Activated CD4-positive, alpha-beta memory T cell treated with anti-CD3 and anti-CD28 coated beads, Interleukin-2, amount 10 ng/mL, durations not matched to agents 7 days and 5 days (primary cell): ENCODE measurements at regions of chr2 and their contacts with region 1.

Region 1: GRCh38 chr2:65056215-65057053 is at the start of gene CEP68:
- DNase-seq: peak; percentile 98
- H3K4me3 Mint-ChIP-seq: peak within 1 kb of the TSS; percentile 94
- H3K27ac Mint-ChIP-seq: peak within 1 kb of the TSS; percentile 77
- H3K4me1 Mint-ChIP-seq: peaks cover 59% of the 10 kb centered on the region
- H3K27me3 Mint-ChIP-seq: peaks cover under 1% of the 10 kb centered on the region
- total RNA-seq, gene CEP68: 12.8 to 13.3 TPM

Region 2: DNA sequence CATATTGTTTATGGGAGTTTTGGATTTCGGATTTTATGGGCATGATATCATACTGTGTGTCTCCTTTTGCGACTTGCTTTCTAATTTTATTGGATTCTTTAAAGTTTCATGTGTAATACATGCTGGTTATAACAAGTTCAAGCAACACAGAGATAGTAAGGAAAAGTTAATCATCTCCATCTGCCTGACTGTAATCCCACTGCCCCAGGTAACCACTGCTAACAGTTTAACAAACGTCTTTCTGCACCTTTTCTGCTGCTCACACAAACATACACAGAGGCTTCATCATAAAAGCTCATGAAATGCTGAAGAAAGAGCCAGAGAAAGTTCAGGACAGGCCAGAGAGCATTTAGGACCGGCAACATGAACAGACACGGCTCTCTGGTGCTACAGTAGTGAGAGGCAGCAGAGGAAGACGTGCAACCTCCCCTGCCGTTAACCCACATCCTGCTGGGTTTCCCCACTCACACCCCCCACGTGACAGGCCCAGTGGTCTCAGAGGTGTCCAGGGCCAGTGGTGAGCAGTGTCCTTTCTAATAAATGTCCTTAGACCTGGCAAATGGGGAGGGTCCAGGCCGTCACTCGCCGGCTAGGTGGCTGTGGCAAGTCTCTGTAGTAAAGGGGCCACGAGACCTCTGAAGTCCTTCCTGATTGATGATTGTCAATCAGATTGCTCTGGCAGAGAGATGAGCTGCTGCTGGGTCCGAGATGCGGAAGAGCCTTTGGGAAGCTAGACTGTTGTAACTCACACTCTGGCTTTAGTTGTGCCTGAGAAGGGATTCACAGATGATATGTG is 110.3 kb before region 1 on chr2:
- CTCF ChIA-PET with region 1: interaction called, 3 read pairs
- POLR2A ChIA-PET with region 1: interaction called, 12 read pairs
- DNase-seq: peak; percentile 84
- H3K4me3 Mint-ChIP-seq: peak overlapping the region; percentile 68
- H3K27ac Mint-ChIP-seq: peak overlapping the region; percentile 94
- H3K4me1 Mint-ChIP-seq: peaks cover 58% of the 10 kb centered on the region
- H3K27me3 Mint-ChIP-seq: no peaks in the 10 kb centered on the region

Region 3: GRCh38 chr2:64988420-64989125 is 67.9 kb before region 1 on chr2:
- CTCF ChIA-PET with region 1: interaction called, 8 read pairs
- POLR2A ChIA-PET with region 1: interaction called, 40 read pairs
- DNase-seq: peak; percentile 88
- H3K4me3 Mint-ChIP-seq: peak overlapping the region; percentile 72
- H3K27ac Mint-ChIP-seq: peak overlapping the region; percentile 74
- H3K4me1 Mint-ChIP-seq: peaks cover 70% of the 10 kb centered on the region
- H3K27me3 Mint-ChIP-seq: peaks cover 4% of the 10 kb centered on the region

Region 4: DNA sequence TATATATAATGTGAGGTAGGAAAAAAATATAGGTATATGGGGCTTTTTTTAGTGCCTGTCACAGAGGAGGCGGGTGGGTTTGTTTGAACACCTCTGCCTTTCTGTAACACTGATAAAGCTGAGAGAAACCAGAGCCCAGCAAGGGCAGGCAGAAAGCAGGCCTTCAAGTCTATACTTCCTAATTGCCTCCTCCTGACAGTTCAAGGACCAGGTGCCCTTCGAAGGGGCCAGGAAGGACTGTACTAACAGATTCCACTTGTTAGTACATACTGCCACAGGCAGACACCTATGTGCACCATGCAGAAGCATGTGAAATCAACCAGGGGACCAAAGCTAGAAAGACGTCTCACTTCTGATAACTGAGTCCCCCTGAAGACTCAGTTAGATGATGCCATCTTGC is 53.4 kb before region 1 on chr2:
- CTCF ChIA-PET with region 1: no interaction called
- POLR2A ChIA-PET with region 1: no interaction called
- DNase-seq: no peak
- H3K4me3 Mint-ChIP-seq: no peak overlapping the region
- H3K27ac Mint-ChIP-seq: no peak overlapping the region
- H3K4me1 Mint-ChIP-seq: peaks cover 9% of the 10 kb centered on the region
- H3K27me3 Mint-ChIP-seq: no peaks in the 10 kb centered on the region

Region 5: DNA sequence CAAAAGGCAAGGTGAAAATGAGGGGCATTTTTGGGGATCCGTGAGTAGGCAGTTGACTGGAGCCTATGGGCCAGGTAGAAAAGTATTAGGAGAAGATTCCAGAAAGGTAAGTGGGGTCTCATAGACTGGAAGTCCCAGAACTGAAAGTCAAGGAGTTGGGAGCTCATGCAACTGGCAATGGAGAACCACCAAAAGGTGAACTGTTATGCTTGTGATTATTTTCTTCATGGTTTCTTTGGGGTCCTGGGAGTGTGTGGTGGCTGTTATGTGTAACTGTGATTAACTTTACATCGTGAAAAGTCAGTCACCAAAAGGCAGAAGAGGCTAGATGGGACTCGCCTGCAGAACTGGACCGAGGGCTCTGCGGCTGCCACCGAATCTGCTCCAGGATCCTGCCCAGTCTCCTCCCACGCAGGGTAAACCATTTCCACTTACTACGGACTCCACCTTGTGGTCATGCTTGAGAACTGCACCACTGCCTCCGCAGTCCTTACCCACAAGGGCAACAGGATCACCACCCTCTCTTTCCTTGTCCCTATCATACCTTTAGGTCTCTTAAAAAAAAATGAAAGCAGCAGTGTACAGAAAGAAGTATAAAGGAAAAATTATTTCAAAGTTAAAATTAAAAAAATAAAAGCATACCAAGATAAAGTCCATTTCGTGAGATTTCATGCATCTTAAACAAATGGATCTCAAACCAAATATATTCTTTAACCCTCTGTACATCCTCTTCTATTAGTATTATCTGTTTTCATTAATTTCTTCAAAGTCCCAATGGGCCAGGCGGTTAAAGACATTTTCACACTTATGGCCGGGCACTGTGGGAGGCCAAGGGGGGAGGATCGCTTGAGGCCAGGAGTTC is 15.8 kb before region 1 on chr2:
- CTCF ChIA-PET with region 1: interaction called, 14 read pairs
- POLR2A ChIA-PET with region 1: interaction called, 11 read pairs
- DNase-seq: peak; percentile 80
- H3K4me3 Mint-ChIP-seq: peak overlapping the region; percentile 28
- H3K27ac Mint-ChIP-seq: no peak overlapping the region
- H3K4me1 Mint-ChIP-seq: peaks cover 14% of the 10 kb centered on the region
- H3K27me3 Mint-ChIP-seq: no peaks in the 10 kb centered on the region

Region 6: DNA sequence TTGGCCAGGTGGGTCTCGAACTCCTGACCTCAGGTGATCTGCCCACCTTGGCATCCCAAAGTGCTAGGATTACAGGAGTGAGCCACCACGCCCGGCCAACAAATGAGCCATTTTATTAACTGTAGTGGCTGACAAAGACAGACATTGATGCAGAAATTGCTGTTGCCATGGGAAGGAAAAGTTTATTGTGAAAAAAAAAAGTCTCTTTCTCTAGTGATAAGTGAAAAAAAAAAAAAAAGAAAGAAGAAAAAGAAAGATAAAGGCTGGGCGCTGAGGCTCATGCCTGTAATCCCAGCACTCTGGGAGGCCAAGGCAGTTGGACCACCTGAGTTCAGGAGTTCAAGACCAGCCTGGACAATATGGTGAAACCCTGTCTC is 113.3 kb after region 1 on chr2:
- CTCF ChIA-PET with region 1: interaction called, 38 read pairs
- POLR2A ChIA-PET with region 1: no interaction called
- DNase-seq: no peak
- H3K4me3 Mint-ChIP-seq: no peak overlapping the region
- H3K27ac Mint-ChIP-seq: no peak overlapping the region
- H3K4me1 Mint-ChIP-seq: no peaks in the 10 kb centered on the region
- H3K27me3 Mint-ChIP-seq: peaks cover 2% of the 10 kb centered on the region